Left colon (tissue), 2 donors: ENCODE measurements at regions of chr19 and their contacts with region 1.

Region 1: GRCh38 chr19:4870025-4870700 is 2.7 kb upstream of the PLIN3 start:
- DNase-seq: peak in 1 of 2 donors; percentile 69
- ATAC-seq: peak; percentile 39

Region 2: DNA sequence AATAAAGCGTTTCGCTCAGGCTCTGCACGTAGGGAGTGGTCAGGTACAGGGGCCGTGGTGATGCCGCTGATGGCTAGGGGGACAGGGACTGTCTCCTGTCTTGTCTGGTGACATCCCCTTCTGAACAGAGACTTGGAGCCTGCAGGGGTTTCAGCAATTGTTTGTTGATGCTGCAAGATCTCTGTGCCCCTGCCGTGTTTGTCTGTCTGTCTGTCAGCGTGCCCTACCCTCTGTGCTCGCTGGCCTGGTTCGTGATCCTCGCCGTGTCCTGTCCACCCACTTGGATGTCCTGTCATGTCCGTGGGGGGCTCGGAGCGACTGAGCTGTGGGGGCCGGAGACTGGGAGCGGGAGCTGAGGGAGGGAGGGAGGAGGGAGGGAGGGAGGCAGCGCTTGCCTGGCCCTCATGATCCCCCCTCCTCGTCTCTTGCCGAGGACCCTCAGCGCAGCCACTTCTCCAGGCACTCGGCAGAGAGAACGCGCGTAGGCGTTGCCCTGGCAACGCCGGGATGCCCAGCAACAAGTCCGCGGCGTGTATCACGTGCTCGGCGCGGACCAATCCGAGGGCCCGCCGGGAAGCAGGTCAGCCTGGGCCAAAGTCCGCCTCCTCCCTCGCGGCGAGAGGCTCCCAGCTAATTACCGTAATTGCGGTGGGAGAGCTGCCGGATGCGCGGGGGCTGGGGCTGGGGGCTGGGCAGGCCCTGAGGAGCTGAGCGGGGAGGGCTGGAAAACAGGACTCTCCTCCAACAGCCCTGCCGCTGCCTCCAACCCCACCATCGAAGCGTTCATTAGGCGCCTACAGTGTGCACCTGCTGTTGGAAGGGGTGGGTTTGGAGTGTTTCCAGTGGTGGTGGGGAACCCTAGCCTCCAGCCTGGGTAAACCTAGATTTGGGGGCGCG is 110.5 kb before region 1 on chr19:
- intact Hi-C with region 1: no loop called
- DNase-seq: peak; percentile 92 to 94
- ATAC-seq: peak; percentile 100

Region 3: DNA sequence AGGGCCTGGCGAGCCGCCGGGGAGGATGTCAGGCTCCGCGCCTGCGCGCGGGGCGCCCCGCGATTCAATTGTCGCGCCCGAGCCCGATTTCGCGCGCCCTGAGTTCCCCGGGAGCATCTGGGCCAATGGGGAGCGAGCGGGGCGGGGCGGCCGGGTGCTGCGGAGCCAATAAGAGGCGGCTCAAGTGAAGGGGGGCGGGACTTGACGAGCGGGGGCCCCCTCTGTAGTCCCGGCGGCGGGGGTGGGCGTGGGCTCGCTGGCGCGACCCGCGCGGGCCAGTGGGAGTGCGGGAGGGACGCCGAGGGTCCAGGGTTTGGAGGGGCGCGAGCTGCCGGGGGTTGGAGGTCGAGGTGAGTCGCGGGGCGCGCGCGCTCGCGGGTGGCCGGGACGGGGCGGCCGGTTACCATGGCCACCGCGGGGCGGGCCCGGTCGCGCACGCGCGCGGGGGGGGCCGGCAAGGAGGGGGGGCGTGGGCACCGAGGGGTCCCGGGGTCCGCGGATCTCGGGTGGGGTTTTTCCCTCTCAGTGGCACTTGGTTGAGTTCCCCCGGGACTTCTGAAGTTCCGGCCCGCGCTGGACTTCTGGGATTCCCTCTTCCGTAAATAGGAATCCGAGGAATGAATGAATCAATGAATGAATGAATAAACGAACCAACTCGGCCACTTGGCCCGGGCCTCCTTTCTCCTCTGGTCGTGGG is 39.9 kb after region 1 on chr19:
- intact Hi-C with region 1: loop called in 1 of 2 experiments (anchors 5 kb)
- DNase-seq: peak; percentile 90 to 97
- ATAC-seq: peak; percentile 93

Region 4: GRCh38 chr19:4951656-4952055 is 81.5 kb after region 1 on chr19:
- intact Hi-C with region 1: no loop called
- DNase-seq: no peak
- ATAC-seq: no peak

Region 5: DNA sequence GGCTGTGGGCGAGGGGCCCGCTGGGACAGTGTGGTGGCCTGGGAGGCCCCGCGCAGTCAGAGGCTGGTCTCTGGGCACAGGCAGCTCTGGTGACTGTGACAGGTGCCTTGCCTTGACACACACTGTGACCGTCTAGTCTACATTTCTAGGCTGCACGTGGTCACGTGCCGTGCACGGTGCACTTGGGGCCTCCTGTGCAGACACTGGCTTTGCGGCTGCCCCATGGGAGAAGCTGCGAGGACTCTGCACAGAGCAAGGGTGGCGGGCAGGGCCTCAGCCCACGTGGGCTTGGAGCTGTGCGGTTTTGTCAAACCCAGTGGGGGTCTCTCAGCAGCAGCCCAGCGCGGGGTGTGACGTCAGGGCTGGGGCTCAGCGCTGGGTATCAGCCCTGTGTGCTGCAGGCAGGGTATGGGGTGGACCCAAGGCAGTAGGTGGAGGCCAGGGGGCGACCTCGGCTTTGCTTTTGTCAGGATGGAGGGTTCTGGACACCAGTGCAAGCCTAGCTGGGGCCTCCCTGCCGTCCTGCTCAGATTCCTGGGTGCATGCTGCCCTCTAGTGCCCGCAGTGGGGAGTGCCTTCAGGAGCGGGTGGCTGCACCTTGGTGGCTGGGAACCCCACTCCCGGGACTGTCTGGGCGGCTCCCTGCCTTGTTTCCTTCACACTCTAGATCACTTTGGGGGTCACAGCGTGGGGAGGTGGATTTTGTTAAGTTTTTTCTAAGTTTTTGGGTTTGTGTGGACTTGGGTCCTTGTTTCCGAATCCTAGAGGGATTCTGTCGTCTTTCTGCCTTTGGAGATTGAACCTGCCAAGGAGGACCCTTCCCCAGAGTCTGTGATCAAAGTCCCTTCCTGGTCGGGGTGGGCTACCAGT is 161.3 kb after region 1 on chr19:
- intact Hi-C with region 1: loop called in 1 of 2 experiments (anchors 10 kb)
- DNase-seq: peak; percentile 67 to 84
- ATAC-seq: peak; percentile 90

Region 6: GRCh38 chr19:5238700-5239099 is 368.5 kb after region 1 on chr19:
- intact Hi-C with region 1: no loop called
- DNase-seq: no peak
- ATAC-seq: no peak